Common myeloid progenitor, CD34-positive (primary cell): ENCODE measurements at regions of chr11 and their contacts with region 1.

Region 1: GRCh38 chr11:44592125-44592940 is 26.9 kb downstream of the CD82 start:
- DNase-seq: no peak
- H3K4me3 ChIP-seq: no peak overlapping the region
- H3K27ac ChIP-seq: no peak overlapping the region
- H3K4me1 ChIP-seq: peaks cover 0 to 29% (median 16%) of the 10 kb centered on the region in 4 experiments
- H3K27me3 ChIP-seq: no peaks in the 10 kb centered on the region

Region 2: DNA sequence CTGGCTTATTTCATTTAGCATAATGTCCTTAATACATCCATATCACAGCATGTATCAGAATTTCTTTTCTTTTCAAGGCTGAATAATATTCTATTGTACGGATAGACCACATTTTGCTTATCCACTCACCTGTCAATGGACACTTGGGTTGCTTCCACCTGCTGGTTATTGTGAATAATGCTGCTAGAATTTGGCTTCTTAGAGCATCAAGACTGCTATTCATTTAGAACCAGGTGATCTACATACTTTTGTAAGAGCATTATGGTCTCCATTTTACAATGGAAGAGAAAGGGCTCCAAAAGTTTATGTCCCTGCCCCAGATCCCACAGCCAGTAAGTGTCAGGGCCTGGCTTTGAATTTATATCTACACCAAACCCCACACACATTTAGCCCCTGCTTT is 127.6 kb before region 1 on chr11:
- CTCF ChIA-PET with region 1: no interaction called
- POLR2A ChIA-PET with region 1: no interaction called
- DNase-seq: peak in 2 of 3 donors; percentile 6 to 28
- H3K4me3 ChIP-seq: no peak overlapping the region
- H3K27ac ChIP-seq: no peak overlapping the region
- H3K4me1 ChIP-seq: no peaks in the 10 kb centered on the region
- H3K27me3 ChIP-seq: peaks cover 0 to 4% (median 2%) of the 10 kb centered on the region in 5 experiments

Region 3: DNA sequence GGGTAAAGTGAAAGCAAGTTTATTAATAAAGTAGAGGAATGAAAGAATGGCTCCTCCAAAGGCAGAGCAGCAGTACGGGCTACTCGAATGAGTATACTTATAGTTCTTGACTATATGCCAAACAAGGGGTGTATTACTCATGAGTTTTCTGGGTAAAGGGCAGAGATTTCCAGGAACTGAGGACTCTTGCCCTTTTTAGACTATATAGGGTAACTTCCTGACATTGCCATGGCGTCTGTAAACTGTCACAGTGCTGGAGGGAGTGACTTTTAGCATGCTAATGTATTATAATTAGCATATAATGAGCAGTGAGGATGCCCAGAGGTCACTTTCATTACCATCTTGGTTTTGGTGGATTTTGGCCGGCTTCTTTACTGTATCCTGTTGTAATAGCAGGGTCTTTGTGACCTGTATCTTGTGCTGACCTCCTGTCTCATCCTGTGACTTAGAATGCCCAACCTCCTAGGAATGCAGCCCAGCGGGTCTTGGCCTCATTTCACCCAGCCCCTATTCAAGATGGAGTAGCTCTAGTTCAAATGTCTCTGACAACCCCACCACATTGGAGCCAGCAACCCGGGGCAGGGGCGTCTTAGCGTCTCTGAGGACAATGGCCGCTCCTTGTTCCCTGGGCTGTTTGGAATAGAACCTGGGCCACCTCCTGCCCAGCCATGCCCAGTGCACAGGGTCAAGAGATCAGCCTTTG is 61.8 kb before region 1 on chr11:
- CTCF ChIA-PET with region 1: no interaction called
- POLR2A ChIA-PET with region 1: no interaction called
- DNase-seq: no peak
- H3K4me3 ChIP-seq: no peak overlapping the region
- H3K27ac ChIP-seq: peak overlapping the region in 1 of 2 experiments; percentile 65
- H3K4me1 ChIP-seq: peaks cover 0 to 18% (median 9%) of the 10 kb centered on the region in 4 experiments
- H3K27me3 ChIP-seq: peaks cover 0 to 4% (median 0%) of the 10 kb centered on the region in 5 experiments

Region 4: DNA sequence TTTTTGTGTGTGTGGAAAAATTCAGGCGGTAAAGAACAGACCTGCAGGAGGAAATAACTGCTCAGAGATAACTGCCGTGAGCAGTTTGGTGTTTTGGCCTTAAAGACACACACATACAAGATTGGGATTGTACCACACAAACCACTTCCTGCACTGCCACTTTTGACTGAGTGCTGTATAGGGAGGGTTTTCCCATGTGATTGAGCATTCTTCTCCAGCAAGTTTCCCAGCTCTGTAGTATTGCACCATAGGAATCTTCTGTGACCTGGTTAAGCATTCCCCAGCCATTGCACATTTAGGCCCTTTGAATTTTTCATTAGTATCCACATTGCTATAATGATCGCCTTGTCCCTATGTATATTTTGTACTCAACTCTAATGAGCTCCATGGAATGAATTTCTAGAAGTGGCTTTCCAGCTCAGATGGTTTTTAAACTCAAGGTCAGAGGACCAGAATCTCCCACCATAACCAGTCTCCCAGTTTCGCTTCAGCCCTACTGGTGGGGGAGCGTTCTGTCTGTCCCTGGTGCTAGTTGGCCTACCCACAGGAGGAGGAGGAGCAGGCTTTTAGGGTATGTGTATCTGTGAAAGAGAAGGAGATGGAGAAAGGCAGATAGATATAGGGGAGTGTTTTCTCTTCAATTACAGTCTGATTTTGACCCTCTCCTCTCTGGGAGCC is 17.6 kb before region 1 on chr11:
- CTCF ChIA-PET with region 1: interaction called, 11 read pairs
- POLR2A ChIA-PET with region 1: interaction called, 3 read pairs
- DNase-seq: peak; percentile 70 to 91 (median 87)
- H3K4me3 ChIP-seq: peak overlapping the region in 5 of 7 experiments; percentile 21 to 46 (median 37)
- H3K27ac ChIP-seq: peak overlapping the region; percentile 69 to 84
- H3K4me1 ChIP-seq: peaks cover 39 to 100% (median 100%) of the 10 kb centered on the region in 4 experiments
- H3K27me3 ChIP-seq: no peaks in the 10 kb centered on the region